K562 (cell line): ENCODE measurements at regions of chr13 and their contacts with region 1.

Region 1: GRCh38 chr13:44243198-44243857 is 130.3 kb upstream of the SERP2 start:
- DNase-seq: peak; percentile 64 to 82 (median 70)
- ATAC-seq: peak; percentile 99
- H3K4me3 ChIP-seq: no peak overlapping the region
- H3K27ac ChIP-seq: no peak overlapping the region
- H3K4me1 ChIP-seq: peaks cover 0 to 11% of the 10 kb centered on the region in 2 experiments; a peak in 1 of 5 replicates
- H3K27me3 ChIP-seq: peaks cover 0 to 5% of the 10 kb centered on the region in 2 experiments; a peak in 1 of 5 replicates
- CTCF ChIP-seq: peak; percentile 78 to 82 (median 79)
- EP300 ChIP-seq: no peak
- POLR2A ChIP-seq: no peak
- RAD21 ChIP-seq: peak; percentile 89 to 91

Region 2: DNA sequence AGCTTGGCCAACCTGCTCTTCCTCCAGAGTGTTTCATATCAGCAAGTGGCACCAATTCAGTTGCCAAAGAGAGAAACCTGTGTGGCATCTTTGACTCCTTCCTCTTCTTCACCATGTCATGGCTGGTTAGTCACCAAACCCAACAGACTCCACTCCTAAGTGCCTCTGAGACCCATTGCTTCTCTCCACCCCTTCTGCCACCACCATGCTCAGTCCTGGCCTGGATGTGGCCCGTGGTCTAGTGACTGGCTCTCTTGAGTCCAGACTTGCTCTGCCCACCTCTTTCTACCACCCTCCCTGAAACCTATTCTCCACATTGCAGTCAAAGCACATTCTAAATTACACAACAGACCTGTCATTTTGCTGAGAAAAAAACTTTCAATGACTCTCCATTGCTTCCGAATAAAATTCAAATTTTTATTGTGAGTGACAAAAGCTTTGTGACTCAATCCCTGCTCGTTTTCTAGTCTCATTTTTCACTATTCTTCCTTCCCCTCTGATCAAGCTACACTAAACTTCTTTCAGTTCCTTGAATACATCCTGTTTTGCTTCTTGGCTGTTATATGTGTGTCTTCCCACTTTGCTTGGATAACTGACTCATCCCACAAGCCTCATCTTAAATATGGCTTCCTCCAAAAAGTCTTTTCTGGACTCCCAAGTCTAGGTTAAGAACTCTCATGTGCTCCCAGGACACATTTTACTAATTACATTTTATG is 1681.4 kb before region 1 on chr13:
- CTCF ChIA-PET with region 1: no interaction called
- POLR2A ChIA-PET with region 1: no interaction called
- in situ Hi-C with region 1: no loop called
- intact Hi-C with region 1: no loop called
- DNase-seq: no peak
- ATAC-seq: no peak
- H3K4me3 ChIP-seq: no peak overlapping the region
- H3K27ac ChIP-seq: no peak overlapping the region
- H3K4me1 ChIP-seq: no peaks in the 10 kb centered on the region
- H3K27me3 ChIP-seq: no peaks in the 10 kb centered on the region
- CTCF ChIP-seq: no peak
- EP300 ChIP-seq: no peak
- POLR2A ChIP-seq: no peak
- RAD21 ChIP-seq: no peak

Region 3: GRCh38 chr13:43905435-43906031 is 337.8 kb before region 1 on chr13:
- CTCF ChIA-PET with region 1: no interaction called
- POLR2A ChIA-PET with region 1: no interaction called
- in situ Hi-C with region 1: no loop called
- intact Hi-C with region 1: loop called (anchors 5 kb)
- DNase-seq: peak; percentile 21 to 52 (median 24)
- ATAC-seq: peak; percentile 64; the same call in 2 of the 3 replicates
- H3K4me3 ChIP-seq: no peak overlapping the region
- H3K27ac ChIP-seq: no peak overlapping the region
- H3K4me1 ChIP-seq: no peaks in the 10 kb centered on the region
- H3K27me3 ChIP-seq: no peaks in the 10 kb centered on the region
- CTCF ChIP-seq: peak; percentile 43 to 68 (median 45); a peak in 5 of 6 replicates
- EP300 ChIP-seq: no peak
- POLR2A ChIP-seq: no peak
- RAD21 ChIP-seq: peak; percentile 72 to 81

Region 4: GRCh38 chr13:44050450-44051063 is 192.8 kb before region 1 on chr13:
- CTCF ChIA-PET with region 1: no interaction called
- POLR2A ChIA-PET with region 1: no interaction called
- in situ Hi-C with region 1: no loop called
- intact Hi-C with region 1: loop called (anchors 10 kb)
- DNase-seq: peak in 3 of 4 experiments; percentile 4 to 6 (median 6)
- ATAC-seq: no peak
- H3K4me3 ChIP-seq: no peak overlapping the region
- H3K27ac ChIP-seq: no peak overlapping the region
- H3K4me1 ChIP-seq: no peaks in the 10 kb centered on the region
- H3K27me3 ChIP-seq: no peaks in the 10 kb centered on the region; a peak in 1 of 5 replicates
- CTCF ChIP-seq: peak in 2 of 3 experiments; percentile 24 to 52; a peak in 2 of 6 replicates
- EP300 ChIP-seq: no peak
- POLR2A ChIP-seq: no peak
- RAD21 ChIP-seq: peak; percentile 45 to 54

Region 5: GRCh38 chr13:44306401-44307192 is 63.3 kb after region 1 on chr13:
- CTCF ChIA-PET with region 1: no interaction called
- POLR2A ChIA-PET with region 1: no interaction called
- in situ Hi-C with region 1: no loop called
- intact Hi-C with region 1: loop called (anchors 5 kb)
- DNase-seq: no peak
- ATAC-seq: no peak
- H3K4me3 ChIP-seq: no peak overlapping the region
- H3K27ac ChIP-seq: no peak overlapping the region
- H3K4me1 ChIP-seq: no peaks in the 10 kb centered on the region
- H3K27me3 ChIP-seq: peaks cover 6 to 34% of the 10 kb centered on the region in 2 experiments; a peak in 3 of 5 replicates
- CTCF ChIP-seq: no peak
- EP300 ChIP-seq: no peak
- POLR2A ChIP-seq: no peak
- RAD21 ChIP-seq: no peak

Region 6: GRCh38 chr13:44388427-44389059 is 145.2 kb after region 1 on chr13:
- CTCF ChIA-PET with region 1: interaction called, 3 read pairs
- POLR2A ChIA-PET with region 1: no interaction called
- in situ Hi-C with region 1: no loop called
- intact Hi-C with region 1: loop called (anchors 5 kb)
- DNase-seq: peak in 3 of 4 experiments; percentile 23 to 73 (median 27)
- ATAC-seq: peak; percentile 65
- H3K4me3 ChIP-seq: no peak overlapping the region
- H3K27ac ChIP-seq: no peak overlapping the region
- H3K4me1 ChIP-seq: peaks cover 24 to 42% of the 10 kb centered on the region in 2 experiments; a peak in 4 of 5 replicates
- H3K27me3 ChIP-seq: no peaks in the 10 kb centered on the region
- CTCF ChIP-seq: peak in 2 of 3 experiments; percentile 15 to 35; a peak in 2 of 6 replicates
- EP300 ChIP-seq: no peak
- POLR2A ChIP-seq: no peak
- RAD21 ChIP-seq: peak; percentile 18 to 55; a peak in 2 of 4 replicates

Region 7: DNA sequence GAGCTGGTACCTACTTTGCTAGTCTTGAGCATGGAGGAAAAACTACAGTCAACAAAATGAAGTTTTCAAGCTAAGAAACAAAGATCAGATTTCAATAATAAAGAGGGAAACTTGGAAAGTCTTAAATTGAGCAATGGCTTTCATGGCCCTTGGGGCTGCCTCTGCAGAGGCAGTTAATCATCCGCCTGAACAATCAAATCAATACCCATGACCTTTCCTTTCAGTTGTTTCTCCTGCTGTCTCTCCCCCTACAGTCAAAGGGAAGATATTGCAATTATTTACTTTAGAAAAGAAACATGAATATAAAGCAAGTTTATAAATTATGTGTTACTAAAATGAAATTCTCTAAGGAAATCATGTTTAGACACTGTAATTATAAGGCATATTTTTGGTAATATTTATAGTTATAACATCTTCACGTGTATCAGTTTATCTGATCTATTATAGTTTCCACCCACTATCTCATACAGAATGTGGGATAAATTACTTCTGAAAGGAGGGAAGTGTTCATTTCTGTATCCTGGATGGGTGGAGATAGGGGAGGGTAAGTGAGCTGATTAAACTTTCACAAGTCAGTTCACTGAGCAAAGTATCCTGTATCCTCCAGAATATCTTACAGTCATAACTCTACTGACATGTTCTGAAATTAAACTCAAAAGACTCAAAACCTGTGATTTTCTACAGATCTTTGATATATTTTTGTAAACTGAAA is 405.2 kb after region 1 on chr13:
- CTCF ChIA-PET with region 1: no interaction called
- POLR2A ChIA-PET with region 1: no interaction called
- in situ Hi-C with region 1: no loop called
- intact Hi-C with region 1: no loop called
- DNase-seq: peak in 1 of 4 experiments; percentile 7
- ATAC-seq: no peak
- H3K4me3 ChIP-seq: no peak overlapping the region
- H3K27ac ChIP-seq: no peak overlapping the region
- H3K4me1 ChIP-seq: no peaks in the 10 kb centered on the region
- H3K27me3 ChIP-seq: no peaks in the 10 kb centered on the region; a peak in 1 of 5 replicates
- CTCF ChIP-seq: peak in 2 of 3 experiments; percentile 19 to 40; a peak in 2 of 6 replicates
- EP300 ChIP-seq: no peak
- POLR2A ChIP-seq: no peak
- RAD21 ChIP-seq: peak in 1 of 2 experiments; percentile 37; a peak in 2 of 4 replicates

Region 8: GRCh38 chr13:45417790-45418534 is 1174.6 kb after region 1 on chr13 and contains the start of gene SLC25A30:
- CTCF ChIA-PET with region 1: no interaction called
- POLR2A ChIA-PET with region 1: no interaction called
- in situ Hi-C with region 1: loop called (anchors 10 kb)
- intact Hi-C with region 1: no loop called
- DNase-seq: peak; percentile 78 to 91 (median 82)
- ATAC-seq: peak; percentile 96
- H3K4me3 ChIP-seq: peak within 1 kb of the TSS; percentile 66
- H3K27ac ChIP-seq: peak within 1 kb of the TSS; percentile 62
- H3K4me1 ChIP-seq: peaks cover 17 to 18% of the 10 kb centered on the region in 2 experiments; a peak in 4 of 5 replicates
- H3K27me3 ChIP-seq: no peaks in the 10 kb centered on the region
- CTCF ChIP-seq: no peak
- EP300 ChIP-seq: no peak
- POLR2A ChIP-seq: peak; percentile 61
- RAD21 ChIP-seq: no peak
- polyA plus RNA-seq, gene SLC25A30: 1.1 to 1.6 TPM